HepG2 (cell line): ENCODE measurements at regions of chr1 and their contacts with region 1.

Region 1: GRCh38 chr1:98556521-98557158 is 104.9 kb upstream of the SNX7 start:
- DNase-seq: peak; percentile 30
- ATAC-seq: no peak
- H3K4me3 ChIP-seq: no peak overlapping the region
- H3K27ac ChIP-seq: no peak overlapping the region
- H3K4me1 ChIP-seq: no peaks in the 10 kb centered on the region
- H3K27me3 ChIP-seq: no peaks in the 10 kb centered on the region
- CTCF ChIP-seq: peak; percentile 36; the same call in 1 of the 2 replicates
- EP300 ChIP-seq: no peak
- POLR2A ChIP-seq: no peak
- RAD21 ChIP-seq: no peak

Region 2: DNA sequence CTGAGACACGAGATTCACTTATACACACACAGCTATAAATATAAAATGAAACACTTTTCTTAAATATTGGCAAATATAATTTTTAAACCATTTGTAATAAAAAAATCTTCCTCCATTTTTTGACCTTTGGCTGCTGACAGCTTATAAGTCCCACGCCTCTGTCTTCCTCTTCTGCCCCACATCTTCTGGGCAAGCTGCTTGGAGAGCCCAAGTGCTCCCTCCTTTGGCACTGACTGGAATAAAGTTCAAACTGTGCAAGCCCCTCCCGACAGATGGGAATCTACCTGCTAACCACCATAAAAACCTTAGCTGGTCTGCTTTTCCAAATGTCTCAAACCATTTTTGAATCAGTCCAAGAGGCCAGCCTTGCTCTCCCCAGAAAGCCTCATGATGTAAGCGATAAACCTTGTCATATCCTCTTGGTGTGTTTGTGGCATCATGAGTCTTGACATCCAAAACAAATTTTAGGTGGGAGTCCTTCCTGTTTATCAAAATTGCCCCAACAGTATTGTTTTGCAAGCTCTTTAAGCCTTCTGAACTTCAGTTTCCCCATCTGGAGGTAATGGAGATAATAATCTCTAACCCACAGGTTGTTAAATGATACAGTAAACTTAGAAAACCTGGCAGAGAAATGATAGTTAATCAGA is 204.7 kb after region 1 on chr1:
- CTCF ChIA-PET with region 1: no interaction called
- POLR2A ChIA-PET with region 1: no interaction called
- in situ Hi-C with region 1: no loop called
- intact Hi-C with region 1: loop called (anchors 5 kb)
- DNase-seq: peak; percentile 15
- ATAC-seq: peak; percentile 49; the same call in 1 of the 3 replicates
- H3K4me3 ChIP-seq: no peak overlapping the region
- H3K27ac ChIP-seq: no peak overlapping the region
- H3K4me1 ChIP-seq: no peaks in the 10 kb centered on the region
- H3K27me3 ChIP-seq: no peaks in the 10 kb centered on the region
- CTCF ChIP-seq: 0 out of 2 replicates have a peak, but pooled peaks have one; percentile 19
- EP300 ChIP-seq: no peak
- POLR2A ChIP-seq: no peak
- RAD21 ChIP-seq: no peak

Region 3: DNA sequence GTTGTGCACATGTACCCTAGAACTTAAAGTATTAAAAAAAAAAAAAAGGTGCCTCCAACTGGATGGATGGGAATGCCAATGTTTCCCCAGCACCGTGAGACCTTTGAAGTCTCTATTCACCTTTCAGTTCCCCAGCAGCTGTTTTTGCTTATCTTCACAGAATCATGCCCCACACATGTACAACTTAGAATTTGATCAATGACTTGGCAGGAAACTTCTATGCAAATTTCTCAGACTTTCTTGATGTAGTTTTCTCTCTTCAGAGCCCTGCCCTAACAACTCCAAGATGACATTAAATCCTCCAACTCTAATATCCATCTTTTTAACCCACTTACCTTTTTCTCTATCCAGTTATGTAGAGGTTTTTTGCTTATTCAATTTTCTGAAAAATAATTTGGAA is 303.7 kb after region 1 on chr1:
- CTCF ChIA-PET with region 1: no interaction called
- POLR2A ChIA-PET with region 1: no interaction called
- in situ Hi-C with region 1: no loop called
- intact Hi-C with region 1: no loop called
- DNase-seq: no peak
- ATAC-seq: no peak
- H3K4me3 ChIP-seq: no peak overlapping the region
- H3K27ac ChIP-seq: no peak overlapping the region
- H3K4me1 ChIP-seq: no peaks in the 10 kb centered on the region
- H3K27me3 ChIP-seq: no peaks in the 10 kb centered on the region
- CTCF ChIP-seq: no peak
- EP300 ChIP-seq: no peak
- POLR2A ChIP-seq: no peak
- RAD21 ChIP-seq: no peak